Mammary epithelial cell (primary cell): ENCODE measurements at regions of chr9 and their contacts with region 1.

Region 1: GRCh38 chr9:3887221-3887653 is 361.4 kb upstream of the RFX3 start:
- DNase-seq: peak; percentile 17
- H3K4me3 ChIP-seq: no peak overlapping the region
- H3K27ac ChIP-seq: peak overlapping the region; percentile 81
- H3K4me1 ChIP-seq: peaks cover 27% of the 10 kb centered on the region
- H3K27me3 ChIP-seq: no peaks in the 10 kb centered on the region
- CTCF ChIP-seq: no peak

Region 2: DNA sequence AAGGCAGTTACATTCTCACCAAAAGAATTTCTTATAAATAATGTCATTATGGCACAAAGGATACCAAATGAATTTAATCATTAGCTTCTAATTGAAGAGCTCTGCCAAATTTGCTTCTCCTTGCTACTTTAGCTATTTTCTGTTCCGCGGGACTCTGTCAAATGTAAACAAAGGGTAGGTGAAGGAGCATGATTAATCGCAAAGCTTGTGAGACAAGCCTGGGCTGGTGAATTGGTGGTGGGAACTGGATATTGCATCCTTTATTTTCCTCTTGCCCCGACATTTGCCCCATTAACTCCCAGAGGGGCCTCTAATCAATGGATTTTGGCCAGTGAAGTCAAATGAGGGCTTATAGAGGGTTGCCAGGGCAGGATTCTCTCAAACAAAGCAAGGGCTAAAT is 127.2 kb before region 1 on chr9:
- CTCF ChIA-PET with region 1: no interaction called
- dilution Hi-C with region 1: no loop called
- in situ Hi-C with region 1: no loop called
- intact Hi-C with region 1: loop called (anchors 5 kb)
- DNase-seq: peak; percentile 63
- H3K4me3 ChIP-seq: no peak overlapping the region
- H3K27ac ChIP-seq: peak overlapping the region; percentile 0
- H3K4me1 ChIP-seq: peaks cover 11% of the 10 kb centered on the region
- H3K27me3 ChIP-seq: no peaks in the 10 kb centered on the region
- CTCF ChIP-seq: peak; percentile 4 to 33